OCI-LY7 (cell line): ENCODE measurements at regions of chr4 and their contacts with region 1.

Region 1: DNA sequence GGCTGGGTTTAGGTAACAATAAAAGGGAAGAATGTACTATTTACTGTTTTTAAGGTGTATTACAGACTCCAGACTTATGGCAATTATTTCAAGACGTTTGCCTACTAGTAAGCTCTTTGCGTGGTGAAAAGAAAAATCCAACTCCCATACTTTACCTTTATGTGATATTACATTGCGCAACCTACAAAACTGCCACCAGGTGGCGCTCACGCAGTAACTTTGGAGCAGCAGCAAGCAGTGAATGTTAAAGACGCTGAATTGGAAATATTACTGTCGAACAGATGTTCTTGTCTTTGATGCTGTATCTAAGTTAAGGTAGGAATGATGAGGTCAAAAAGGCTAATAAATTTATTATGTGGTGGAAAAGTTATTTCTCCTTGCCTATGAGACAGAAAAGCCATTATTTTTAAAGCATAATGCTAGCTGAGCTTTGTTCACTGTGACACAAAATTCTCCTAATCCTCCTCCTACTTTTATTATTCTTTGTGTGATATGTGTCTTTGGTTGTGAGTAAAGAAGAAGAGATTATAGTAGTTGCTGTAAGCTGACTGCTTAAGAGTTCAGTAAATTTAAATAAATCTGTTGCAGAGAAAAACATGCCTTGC is 1099.8 kb upstream of the TENM3 start:
- DNase-seq: peak; percentile 74
- H3K4me3 ChIP-seq: no peak overlapping the region
- H3K27ac ChIP-seq: no peak overlapping the region
- H3K4me1 ChIP-seq: no peaks in the 10 kb centered on the region
- CTCF ChIP-seq: peak; percentile 96

Region 2: GRCh38 chr4:181294421-181294820 is 151.1 kb after region 1 on chr4:
- CTCF ChIA-PET with region 1: no interaction called
- POLR2A ChIA-PET with region 1: no interaction called
- intact Hi-C with region 1: loop called (anchors 10 kb)
- DNase-seq: no peak
- H3K4me3 ChIP-seq: no peak overlapping the region
- H3K27ac ChIP-seq: no peak overlapping the region
- H3K4me1 ChIP-seq: no peaks in the 10 kb centered on the region
- CTCF ChIP-seq: no peak